Right ventricle myocardium inferior (tissue), 1 donor: ENCODE measurements at regions of chr10 and their contacts with region 1.

Region 1: GRCh38 chr10:119725828-119726675 is at the start of gene INPP5F:
- DNase-seq: peak; percentile 99
- ATAC-seq: peak; percentile 100
- total RNA-seq, gene INPP5F: 4.0 TPM

Region 2: DNA sequence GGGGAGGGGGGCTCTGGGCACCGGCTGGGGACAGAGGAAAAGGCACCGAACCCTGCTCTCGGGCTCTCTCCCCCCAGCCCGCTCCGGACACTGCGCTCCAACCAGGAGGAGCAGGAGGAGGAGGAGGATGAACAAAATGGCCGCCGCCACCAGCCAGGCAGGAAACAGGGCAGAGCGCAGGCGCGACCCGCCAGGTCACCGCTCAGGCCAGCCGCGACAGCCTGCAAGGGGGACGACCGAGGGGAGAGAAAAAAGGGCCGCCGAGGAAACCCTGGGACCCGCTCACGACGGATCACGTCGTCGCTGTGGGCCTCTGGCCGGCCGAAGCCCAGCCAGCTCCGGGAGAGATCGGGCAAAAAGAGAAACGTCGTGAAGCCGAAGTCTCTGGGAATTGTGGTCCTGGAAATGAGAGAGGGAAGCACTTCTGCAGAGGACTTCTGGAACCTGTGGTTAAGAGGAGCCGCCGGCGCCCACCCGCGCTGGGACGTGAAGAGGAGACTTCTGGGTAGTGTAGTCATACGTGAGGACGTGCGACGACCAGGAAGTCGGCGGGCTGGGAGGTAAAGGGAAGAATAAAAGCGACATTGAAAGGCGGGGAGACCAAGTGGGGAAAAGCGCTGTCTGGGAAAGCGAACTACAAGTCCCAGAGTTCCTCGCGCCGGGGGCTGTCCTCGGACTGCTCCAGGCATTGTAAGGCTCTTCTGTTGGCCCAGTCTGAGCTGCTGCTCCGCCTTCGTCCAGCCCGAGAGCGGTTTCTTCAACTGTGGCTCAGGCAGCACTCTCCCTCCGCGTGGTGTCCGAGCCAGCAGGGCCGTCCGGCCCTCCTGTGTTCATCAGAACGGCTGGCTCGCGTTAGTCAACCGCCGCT is 129.3 kb before region 1 on chr10 and contains the start of gene TIAL1:
- intact Hi-C with region 1: loop called (anchors 5 kb)
- DNase-seq: peak; percentile 99
- ATAC-seq: peak; percentile 97
- total RNA-seq, gene TIAL1: 74.0 TPM

Region 3: DNA sequence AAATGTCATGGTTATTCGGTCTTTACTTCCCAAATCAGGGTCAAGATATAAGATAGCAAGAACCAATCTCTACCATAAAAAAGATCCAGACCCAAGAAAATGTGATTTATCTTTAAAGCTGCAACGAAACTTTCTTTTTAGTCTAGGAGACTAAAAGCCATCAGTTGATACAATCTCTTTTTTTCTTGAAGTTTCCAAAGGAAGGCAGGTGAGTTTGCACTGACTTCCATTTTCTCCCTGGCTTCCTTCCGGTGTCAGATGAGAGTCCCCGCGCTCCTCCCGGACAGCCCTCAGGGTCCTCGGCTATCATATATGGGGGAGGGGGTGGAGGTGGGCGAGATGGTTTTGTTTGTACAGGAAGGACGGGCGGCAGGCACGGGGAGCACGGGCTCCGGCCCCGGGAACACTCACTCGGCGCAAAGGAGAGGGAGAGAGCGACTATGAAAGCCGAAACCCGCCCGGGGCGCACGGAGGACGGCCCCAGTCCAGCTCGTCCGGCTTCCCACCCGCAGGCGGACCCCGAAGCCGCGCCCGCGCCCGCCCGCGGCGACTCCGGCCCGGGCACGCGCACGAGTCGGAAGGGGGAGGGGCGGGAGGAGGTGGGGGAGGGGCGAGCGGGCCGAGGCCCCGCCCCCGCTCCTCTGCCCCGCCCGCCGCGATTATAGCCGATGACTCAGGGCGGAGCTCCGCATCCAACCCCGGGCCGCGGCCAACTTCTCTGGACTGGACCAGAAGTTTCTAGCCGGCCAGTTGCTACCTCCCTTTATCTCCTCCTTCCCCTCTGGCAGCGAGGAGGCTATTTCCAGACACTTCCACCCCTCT is 75.1 kb before region 1 on chr10 and contains the start of gene BAG3:
- intact Hi-C with region 1: loop called (anchors 1 kb)
- DNase-seq: peak; percentile 97
- ATAC-seq: peak; percentile 94
- total RNA-seq, gene BAG3: 152 TPM

Region 4: GRCh38 chr10:119686439-119687191 is 39.4 kb before region 1 on chr10:
- intact Hi-C with region 1: loop called (anchors 2 kb)
- DNase-seq: peak; percentile 89
- ATAC-seq: peak; percentile 85

Region 5: GRCh38 chr10:119872860-119873681 is 147.0 kb after region 1 on chr10:
- intact Hi-C with region 1: loop called (anchors 2 kb)
- DNase-seq: peak; percentile 97
- ATAC-seq: peak; percentile 99

Region 6: DNA sequence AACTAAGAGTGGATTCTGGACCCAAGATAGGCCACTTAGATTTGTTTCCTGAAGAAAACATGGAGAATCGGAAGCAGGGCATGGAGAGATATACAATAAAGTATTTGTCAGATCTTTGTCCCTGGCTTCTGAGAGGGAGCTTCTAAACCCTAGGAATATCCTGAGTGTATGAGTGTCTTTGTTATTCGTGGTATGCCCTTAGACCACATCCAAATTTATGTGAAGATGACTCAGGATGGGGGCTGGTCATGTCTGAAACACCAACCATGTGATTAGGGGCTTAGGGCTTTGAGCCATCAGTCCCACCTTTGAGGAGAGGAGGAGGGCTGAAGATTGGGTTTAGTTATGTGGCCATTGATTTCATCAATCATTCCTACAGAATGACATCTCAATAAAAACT is 661.3 kb after region 1 on chr10:
- intact Hi-C with region 1: no loop called
- DNase-seq: no peak
- ATAC-seq: no peak